ENCODE measurements at regions of chr1 and their contacts with region 1.

Region 1: DNA sequence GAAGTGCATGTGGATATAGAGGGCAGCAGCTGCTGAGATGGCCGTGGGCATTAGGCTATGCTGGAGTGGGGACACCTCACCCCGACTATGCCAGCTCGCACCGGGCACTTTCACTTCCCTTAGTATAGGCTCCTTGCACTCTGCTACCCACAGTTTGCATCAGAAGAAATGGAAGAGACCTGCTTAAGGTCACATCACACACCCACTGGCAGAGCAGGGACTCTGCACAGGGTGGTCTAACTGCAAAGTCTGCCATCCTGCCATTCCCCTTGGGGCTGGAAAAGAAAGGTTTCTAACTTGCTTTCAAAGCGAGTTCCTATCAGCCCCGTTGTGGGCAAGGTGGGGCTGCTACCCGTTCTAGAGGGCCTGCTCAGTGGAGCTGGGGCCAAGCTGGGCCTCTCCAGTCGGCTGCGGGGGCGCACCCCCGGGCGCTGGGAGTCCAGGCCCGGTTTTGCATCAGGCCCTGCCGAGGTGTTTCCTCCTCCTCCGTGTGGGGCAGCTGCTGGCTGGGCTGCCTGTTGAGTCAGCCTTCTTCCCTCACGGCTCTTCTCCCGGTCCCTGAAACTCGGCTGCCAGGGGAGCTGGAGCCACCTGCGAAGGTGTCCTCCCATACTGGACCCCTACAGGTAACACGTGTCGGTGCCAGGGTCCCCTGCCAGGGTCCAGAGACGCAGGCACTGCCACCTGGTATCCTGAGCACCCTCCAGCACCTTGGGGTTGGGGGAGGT is at the start of gene SYTL1:
- DNase-seq: peak; percentile 80
- H3K4me3 Mint-ChIP-seq: peak within 1 kb of the TSS; percentile 84
- H3K27ac Mint-ChIP-seq: peak within 1 kb of the TSS; percentile 92
- H3K4me1 Mint-ChIP-seq: peaks cover 51% of the 10 kb centered on the region
- H3K27me3 Mint-ChIP-seq: no peaks in the 10 kb centered on the region
- total RNA-seq, gene SYTL1: 27.3 to 30.4 TPM

Region 2: GRCh38 chr1:27321813-27322577 is 19.7 kb before region 1 on chr1 and contains the start of gene TMEM222:
- CTCF ChIA-PET with region 1: interaction called, 5 read pairs
- POLR2A ChIA-PET with region 1: interaction called, 6 read pairs
- intact Hi-C with region 1: loop called (anchors 1 kb)
- DNase-seq: peak; percentile 98
- H3K4me3 Mint-ChIP-seq: peak within 1 kb of the TSS; percentile 96
- H3K27ac Mint-ChIP-seq: peak within 1 kb of the TSS; percentile 82
- H3K4me1 Mint-ChIP-seq: peaks cover 41% of the 10 kb centered on the region
- H3K27me3 Mint-ChIP-seq: no peaks in the 10 kb centered on the region
- total RNA-seq, gene TMEM222: 22.8 to 24.6 TPM

Region 3: DNA sequence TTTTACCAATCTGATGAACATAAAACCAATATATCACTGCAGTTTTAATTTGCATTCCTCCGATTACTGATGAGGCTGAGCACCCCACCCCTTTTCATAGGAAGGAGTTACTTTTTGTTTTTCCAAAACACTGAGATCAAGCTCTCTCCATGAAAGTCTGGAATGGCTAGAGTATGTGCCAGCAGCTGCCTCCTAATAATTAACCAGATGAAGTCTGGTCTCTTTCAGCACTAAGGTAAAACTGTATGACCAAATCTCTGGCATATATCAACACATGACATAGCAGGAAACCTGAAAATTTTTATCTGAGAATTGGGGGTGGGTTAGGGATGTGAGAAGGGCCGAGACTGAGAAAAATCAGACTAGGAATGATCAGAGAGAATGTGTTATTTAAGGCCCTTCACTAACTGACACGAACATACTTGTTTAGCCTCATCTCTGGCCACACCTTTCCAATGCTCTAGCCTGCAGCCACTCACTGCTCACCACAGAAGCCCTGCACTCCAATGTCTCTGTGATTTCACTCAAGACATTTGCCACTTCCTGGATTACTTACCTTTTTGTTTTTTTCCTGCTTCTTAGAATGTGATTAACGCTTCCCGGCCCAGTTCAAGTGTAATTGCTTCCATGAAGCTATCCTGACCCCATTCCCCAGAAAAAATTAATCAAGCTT is 113.6 kb after region 1 on chr1:
- CTCF ChIA-PET with region 1: no interaction called
- POLR2A ChIA-PET with region 1: no interaction called
- intact Hi-C with region 1: no loop called
- DNase-seq: peak; percentile 53
- H3K4me3 Mint-ChIP-seq: no peak overlapping the region
- H3K27ac Mint-ChIP-seq: peak overlapping the region; percentile 82
- H3K4me1 Mint-ChIP-seq: peaks cover 39% of the 10 kb centered on the region
- H3K27me3 Mint-ChIP-seq: no peaks in the 10 kb centered on the region